GM13977 (cell line): ENCODE measurements at regions of chr12 and their contacts with region 1.

Region 1: DNA sequence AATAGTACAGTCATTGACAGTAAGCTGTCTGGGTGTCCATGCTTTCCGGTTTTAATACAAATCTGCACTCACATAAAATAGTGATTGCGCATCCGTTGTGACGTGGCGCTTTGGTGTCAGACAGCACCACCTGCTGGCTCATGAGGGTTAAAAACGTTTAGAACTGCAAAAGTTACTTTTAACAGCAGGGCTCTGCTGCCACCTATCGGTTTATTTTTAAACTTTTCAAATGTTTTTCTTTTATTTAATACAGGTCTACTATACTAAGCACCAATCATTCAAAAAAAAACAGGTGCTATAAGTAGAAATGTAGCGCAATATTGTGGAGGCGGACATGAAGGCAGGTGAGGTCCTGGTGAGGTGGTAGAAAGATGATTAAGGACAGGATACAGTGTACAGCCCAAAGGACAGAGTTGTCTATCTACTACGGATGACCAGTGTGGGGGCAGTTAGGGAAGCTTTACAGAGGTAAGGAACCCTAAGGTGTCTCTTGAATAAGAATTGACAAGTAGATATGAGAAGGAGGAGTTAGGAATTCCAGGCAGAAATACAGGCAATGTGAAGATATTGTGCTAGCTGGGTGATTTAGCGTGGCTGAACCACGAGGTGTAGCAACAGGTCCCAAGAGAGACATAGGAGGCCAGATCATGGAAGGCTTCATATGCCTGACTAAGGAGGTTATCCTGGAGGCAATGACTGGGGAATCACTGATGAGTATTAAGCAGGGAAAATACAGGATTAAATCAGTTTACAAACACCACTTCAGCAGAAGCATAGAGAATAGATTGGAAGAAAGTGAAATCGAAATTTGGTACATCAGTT is 91.5 kb upstream of the PRB2 start:
- DNase-seq: peak; percentile 80
- CTCF ChIP-seq: peak; percentile 89

Region 2: DNA sequence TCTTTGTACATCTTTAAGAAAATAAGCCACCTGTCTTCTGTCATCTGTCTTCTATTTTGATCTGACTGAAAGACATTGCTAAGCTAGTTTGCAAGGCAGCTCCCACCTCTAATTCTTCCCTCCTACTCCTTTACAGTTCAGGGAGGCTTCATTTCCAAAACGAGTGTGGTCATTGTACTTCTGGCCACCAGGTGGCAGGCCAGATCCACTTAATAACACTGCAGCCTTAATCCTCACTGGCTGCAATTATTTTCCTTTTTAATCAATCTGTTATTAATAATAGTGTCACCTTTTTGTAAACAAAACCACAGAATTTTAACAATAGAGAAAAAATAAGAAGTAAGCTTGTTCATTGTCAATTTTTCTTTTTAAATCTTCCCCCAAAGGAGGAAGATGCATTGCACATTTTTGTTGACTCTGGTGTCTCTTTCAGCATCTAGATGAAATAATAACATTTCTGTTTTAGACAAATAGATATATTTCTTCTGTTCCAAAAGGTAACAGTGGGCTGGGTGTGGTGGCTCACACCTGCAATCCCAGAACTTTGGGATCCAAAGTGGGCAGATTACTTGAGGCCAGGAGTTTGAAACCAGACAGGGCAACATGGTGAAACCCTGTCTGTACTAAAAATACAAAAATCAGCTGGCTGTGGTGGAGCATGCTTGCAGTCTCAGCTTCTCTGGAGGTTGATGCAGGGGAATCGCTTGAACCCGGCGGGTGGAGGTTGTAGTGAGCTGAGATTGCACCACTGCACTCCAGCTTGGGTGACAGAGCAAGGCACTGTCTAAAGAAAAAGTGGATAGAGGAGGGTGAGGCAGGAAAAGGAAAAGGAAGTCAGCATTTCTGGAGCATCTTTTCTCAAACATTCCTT is 1250.8 kb before region 1 on chr12:
- in situ Hi-C with region 1: loop called (anchors 25 kb)
- DNase-seq: peak; percentile 59
- CTCF ChIP-seq: peak; percentile 75

Region 3: DNA sequence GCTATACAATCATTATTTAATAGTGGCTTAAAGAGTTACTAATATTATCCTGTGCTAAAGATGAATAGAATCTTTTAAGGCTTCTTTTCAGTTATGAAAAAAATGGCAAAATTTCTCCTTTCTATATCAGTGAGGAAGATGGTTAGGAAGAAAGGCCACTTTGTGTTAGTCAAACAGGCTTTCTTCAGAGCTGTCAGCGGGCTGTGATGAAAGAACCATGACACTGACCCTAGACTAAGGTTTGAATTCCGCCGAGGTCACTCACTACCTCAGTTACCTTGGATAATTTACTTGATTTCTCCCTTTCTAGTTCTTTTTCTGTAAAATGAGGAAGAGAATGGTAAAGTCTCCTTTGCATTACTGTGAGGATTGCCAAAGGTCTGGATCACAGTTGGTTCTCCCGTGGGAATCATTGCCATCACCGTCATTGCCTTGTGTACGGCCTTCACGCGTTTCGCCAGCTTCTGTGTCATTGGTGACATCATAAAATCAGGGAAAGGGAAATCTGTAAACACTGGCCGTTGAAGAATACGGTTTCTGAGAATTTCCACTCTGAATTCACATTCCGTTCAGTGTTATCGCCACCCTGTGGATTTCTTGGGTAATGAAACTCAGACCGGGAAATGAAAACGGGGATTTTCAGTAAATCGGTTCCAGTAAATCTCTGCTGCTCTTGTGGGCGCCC is 737.0 kb before region 1 on chr12:
- in situ Hi-C with region 1: loop called (anchors 25 kb)
- DNase-seq: peak; percentile 61
- CTCF ChIP-seq: peak; percentile 86

Region 4: DNA sequence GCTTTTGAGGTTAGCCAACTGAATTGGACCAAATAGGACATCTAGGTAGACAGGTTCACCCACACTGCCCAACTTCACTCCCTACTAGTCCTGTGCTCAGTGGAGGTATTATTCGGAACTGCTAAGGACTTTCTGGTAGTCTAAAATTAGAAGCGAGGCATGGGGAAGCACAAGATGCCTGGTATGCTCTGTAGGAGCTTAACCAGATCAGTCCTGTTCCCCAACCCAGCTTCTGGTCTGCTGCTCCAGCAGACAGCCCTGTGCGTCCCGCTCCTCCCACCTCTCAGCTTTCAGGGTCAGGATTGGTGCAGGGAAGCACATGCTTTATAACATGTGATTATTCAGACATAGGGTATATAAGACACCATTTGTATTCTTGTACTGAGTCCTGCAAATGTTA is 248.6 kb before region 1 on chr12:
- in situ Hi-C with region 1: loop called (anchors 10 kb)
- DNase-seq: no peak
- CTCF ChIP-seq: no peak

Region 5: GRCh38 chr12:11431486-11431885 is 55.3 kb before region 1 on chr12:
- in situ Hi-C with region 1: no loop called
- DNase-seq: no peak
- CTCF ChIP-seq: no peak